Naive thymus-derived CD4-positive, alpha-beta T cell (primary cell): ENCODE measurements at regions of chr16 and their contacts with region 1.

Region 1: GRCh38 chr16:29700253-29700987 is 21.4 kb downstream of the QPRT start:
- DNase-seq: peak; percentile 63 to 82 (median 75)
- ATAC-seq: peak; percentile 60
- H3K4me3 ChIP-seq: peak overlapping the region; percentile 41
- H3K4me3 Mint-ChIP-seq: peak overlapping the region; percentile 12 to 84 (median 75)
- H3K27ac ChIP-seq: no peak overlapping the region
- H3K27ac Mint-ChIP-seq: peak overlapping the region; percentile 87 to 99 (median 94)
- H3K4me1 ChIP-seq: peaks cover 31 to 32% of the 10 kb centered on the region in 2 donors
- H3K4me1 Mint-ChIP-seq: peaks cover 30 to 39% (median 32%) of the 10 kb centered on the region in 7 donors
- H3K27me3 ChIP-seq: no peaks in the 10 kb centered on the region
- H3K27me3 Mint-ChIP-seq: no peaks in the 10 kb centered on the region

Region 2: DNA sequence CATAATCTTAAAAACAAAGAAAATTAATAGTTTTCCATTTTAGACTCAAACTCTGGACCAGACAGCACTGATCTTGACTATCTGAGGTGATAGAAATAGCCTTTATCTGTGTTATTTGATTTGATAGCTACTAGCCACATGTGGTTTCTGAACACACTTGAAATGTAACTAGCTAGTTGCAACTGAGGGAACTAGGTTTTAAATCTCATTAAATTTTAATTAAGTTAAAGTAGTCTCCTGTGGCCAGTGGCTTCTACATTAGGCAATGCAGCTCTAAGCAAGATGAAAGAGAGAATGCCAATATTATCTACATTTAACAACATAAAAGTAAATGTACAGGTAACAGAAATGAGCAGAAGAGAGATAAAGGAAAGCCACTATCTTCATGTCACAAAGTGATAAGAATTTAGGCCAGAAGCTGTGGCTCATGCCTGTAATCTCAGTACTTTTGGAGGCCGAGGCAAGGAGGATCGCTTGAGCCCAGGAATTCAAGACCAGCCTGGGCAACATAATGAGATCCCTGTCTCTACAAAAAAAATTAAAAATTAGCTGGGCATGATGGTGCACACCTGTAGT is 48.6 kb before region 1 on chr16:
- CTCF ChIA-PET with region 1: no interaction called
- POLR2A ChIA-PET with region 1: no interaction called
- intact Hi-C with region 1: no loop called
- DNase-seq: no peak
- ATAC-seq: no peak
- H3K4me3 ChIP-seq: no peak overlapping the region
- H3K4me3 Mint-ChIP-seq: no peak overlapping the region
- H3K27ac ChIP-seq: no peak overlapping the region
- H3K27ac Mint-ChIP-seq: no peak overlapping the region
- H3K4me1 ChIP-seq: no peaks in the 10 kb centered on the region
- H3K4me1 Mint-ChIP-seq: peaks cover 4 to 23% (median 13%) of the 10 kb centered on the region in 7 donors
- H3K27me3 ChIP-seq: no peaks in the 10 kb centered on the region
- H3K27me3 Mint-ChIP-seq: no peaks in the 10 kb centered on the region

Region 3: GRCh38 chr16:29720699-29721098 is 20.3 kb after region 1 on chr16:
- CTCF ChIA-PET with region 1: interaction called, 134 read pairs
- POLR2A ChIA-PET with region 1: interaction called, 34 read pairs
- intact Hi-C with region 1: loop called in 1 of 2 experiments (anchors 1 kb)
- DNase-seq: no peak
- ATAC-seq: no peak
- H3K4me3 ChIP-seq: no peak overlapping the region
- H3K4me3 Mint-ChIP-seq: peak overlapping the region in 1 of 10 donors; percentile 49
- H3K27ac ChIP-seq: no peak overlapping the region
- H3K27ac Mint-ChIP-seq: no peak overlapping the region
- H3K4me1 ChIP-seq: no peaks in the 10 kb centered on the region
- H3K4me1 Mint-ChIP-seq: peaks cover 11 to 24% (median 20%) of the 10 kb centered on the region in 7 donors
- H3K27me3 ChIP-seq: no peaks in the 10 kb centered on the region
- H3K27me3 Mint-ChIP-seq: peaks cover 0 to 6% (median 0%) of the 10 kb centered on the region in 5 donors

Region 4: GRCh38 chr16:29745853-29746345 is 45.5 kb after region 1 on chr16 and contains the start of gene C16orf54:
- CTCF ChIA-PET with region 1: interaction called, 5 read pairs
- POLR2A ChIA-PET with region 1: interaction called, 38 read pairs
- intact Hi-C with region 1: loop called in 1 of 2 experiments (anchors 1 kb)
- DNase-seq: peak; percentile 80 to 99 (median 98)
- ATAC-seq: peak; percentile 91
- H3K4me3 ChIP-seq: peak within 1 kb of the TSS; percentile 76
- H3K4me3 Mint-ChIP-seq: peak within 1 kb of the TSS; percentile 96 to 100 (median 99)
- H3K27ac ChIP-seq: peak within 1 kb of the TSS; percentile 99
- H3K27ac Mint-ChIP-seq: peak within 1 kb of the TSS; percentile 95 to 100 (median 99)
- H3K4me1 ChIP-seq: peaks cover 45 to 50% of the 10 kb centered on the region in 2 donors
- H3K4me1 Mint-ChIP-seq: peaks cover 42 to 71% (median 62%) of the 10 kb centered on the region in 7 donors
- H3K27me3 ChIP-seq: no peaks in the 10 kb centered on the region
- H3K27me3 Mint-ChIP-seq: peaks cover 0 to 3% (median 0%) of the 10 kb centered on the region in 5 donors
- total RNA-seq, gene C16orf54: 63.9 to 228 (median 151) TPM

Region 5: GRCh38 chr16:29805378-29806098 is 105.1 kb after region 1 on chr16:
- CTCF ChIA-PET with region 1: interaction called, 26 read pairs
- POLR2A ChIA-PET with region 1: interaction called, 75 read pairs
- intact Hi-C with region 1: loop called in 1 of 2 experiments (anchors 1 kb)
- DNase-seq: peak; percentile 96 to 98 (median 98)
- ATAC-seq: peak; percentile 86
- H3K4me3 ChIP-seq: peak overlapping the region; percentile 87
- H3K4me3 Mint-ChIP-seq: peak overlapping the region; percentile 88 to 100 (median 98)
- H3K27ac ChIP-seq: peak overlapping the region; percentile 95
- H3K27ac Mint-ChIP-seq: peak overlapping the region; percentile 95 to 100 (median 99)
- H3K4me1 ChIP-seq: peaks cover 34 to 39% of the 10 kb centered on the region in 2 donors
- H3K4me1 Mint-ChIP-seq: peaks cover 28 to 49% (median 41%) of the 10 kb centered on the region in 7 donors
- H3K27me3 ChIP-seq: no peaks in the 10 kb centered on the region
- H3K27me3 Mint-ChIP-seq: peaks cover 0 to 2% (median 0%) of the 10 kb centered on the region in 5 donors

Region 6: GRCh38 chr16:29848420-29849297 is 148.2 kb after region 1 on chr16:
- CTCF ChIA-PET with region 1: interaction called, 69 read pairs
- POLR2A ChIA-PET with region 1: interaction called, 12 read pairs
- intact Hi-C with region 1: loop called (anchors 1 kb)
- DNase-seq: peak; percentile 71 to 87 (median 81)
- ATAC-seq: peak; percentile 96
- H3K4me3 ChIP-seq: no peak overlapping the region
- H3K4me3 Mint-ChIP-seq: no peak overlapping the region
- H3K27ac ChIP-seq: no peak overlapping the region
- H3K27ac Mint-ChIP-seq: peak overlapping the region; percentile 18 to 88 (median 56)
- H3K4me1 ChIP-seq: peaks cover 0 to 7% of the 10 kb centered on the region in 2 donors
- H3K4me1 Mint-ChIP-seq: peaks cover 8 to 17% (median 9%) of the 10 kb centered on the region in 7 donors
- H3K27me3 ChIP-seq: no peaks in the 10 kb centered on the region
- H3K27me3 Mint-ChIP-seq: no peaks in the 10 kb centered on the region

Region 7: GRCh38 chr16:29995911-29996772 is 295.7 kb after region 1 on chr16 and contains the start of gene INO80E:
- CTCF ChIA-PET with region 1: no interaction called
- POLR2A ChIA-PET with region 1: interaction called, 12 read pairs
- intact Hi-C with region 1: loop called in 1 of 2 experiments (anchors 2 kb)
- DNase-seq: peak; percentile 94 to 99 (median 98)
- ATAC-seq: peak; percentile 99
- H3K4me3 ChIP-seq: peak within 1 kb of the TSS; percentile 100
- H3K4me3 Mint-ChIP-seq: peak within 1 kb of the TSS; percentile 86 to 99 (median 98)
- H3K27ac ChIP-seq: peak within 1 kb of the TSS; percentile 99
- H3K27ac Mint-ChIP-seq: peak within 1 kb of the TSS; percentile 93 to 99 (median 97)
- H3K4me1 ChIP-seq: peaks cover 16 to 18% of the 10 kb centered on the region in 2 donors
- H3K4me1 Mint-ChIP-seq: peaks cover 24 to 53% (median 38%) of the 10 kb centered on the region in 7 donors
- H3K27me3 ChIP-seq: no peaks in the 10 kb centered on the region
- H3K27me3 Mint-ChIP-seq: no peaks in the 10 kb centered on the region
- total RNA-seq, gene INO80E: 71.7 to 141 (median 95.8) TPM